SK-N-SH (cell line): ENCODE measurements at regions of chr12 and their contacts with region 1.

Region 1: GRCh38 chr12:54134850-54135249 is 53.9 kb downstream of the SMUG1 start:
- DNase-seq: peak; percentile 45
- H3K4me3 ChIP-seq: no peak overlapping the region
- H3K27ac ChIP-seq: peak overlapping the region in 1 of 2 experiments; percentile 67; a peak in 2 of 4 replicates
- H3K4me1 ChIP-seq: peaks cover 0 to 47% of the 10 kb centered on the region in 2 experiments; a peak in 2 of 4 replicates
- H3K27me3 ChIP-seq: no peaks in the 10 kb centered on the region
- CTCF ChIP-seq: no peak
- EP300 ChIP-seq: no peak
- RAD21 ChIP-seq: peak; percentile 76

Region 2: DNA sequence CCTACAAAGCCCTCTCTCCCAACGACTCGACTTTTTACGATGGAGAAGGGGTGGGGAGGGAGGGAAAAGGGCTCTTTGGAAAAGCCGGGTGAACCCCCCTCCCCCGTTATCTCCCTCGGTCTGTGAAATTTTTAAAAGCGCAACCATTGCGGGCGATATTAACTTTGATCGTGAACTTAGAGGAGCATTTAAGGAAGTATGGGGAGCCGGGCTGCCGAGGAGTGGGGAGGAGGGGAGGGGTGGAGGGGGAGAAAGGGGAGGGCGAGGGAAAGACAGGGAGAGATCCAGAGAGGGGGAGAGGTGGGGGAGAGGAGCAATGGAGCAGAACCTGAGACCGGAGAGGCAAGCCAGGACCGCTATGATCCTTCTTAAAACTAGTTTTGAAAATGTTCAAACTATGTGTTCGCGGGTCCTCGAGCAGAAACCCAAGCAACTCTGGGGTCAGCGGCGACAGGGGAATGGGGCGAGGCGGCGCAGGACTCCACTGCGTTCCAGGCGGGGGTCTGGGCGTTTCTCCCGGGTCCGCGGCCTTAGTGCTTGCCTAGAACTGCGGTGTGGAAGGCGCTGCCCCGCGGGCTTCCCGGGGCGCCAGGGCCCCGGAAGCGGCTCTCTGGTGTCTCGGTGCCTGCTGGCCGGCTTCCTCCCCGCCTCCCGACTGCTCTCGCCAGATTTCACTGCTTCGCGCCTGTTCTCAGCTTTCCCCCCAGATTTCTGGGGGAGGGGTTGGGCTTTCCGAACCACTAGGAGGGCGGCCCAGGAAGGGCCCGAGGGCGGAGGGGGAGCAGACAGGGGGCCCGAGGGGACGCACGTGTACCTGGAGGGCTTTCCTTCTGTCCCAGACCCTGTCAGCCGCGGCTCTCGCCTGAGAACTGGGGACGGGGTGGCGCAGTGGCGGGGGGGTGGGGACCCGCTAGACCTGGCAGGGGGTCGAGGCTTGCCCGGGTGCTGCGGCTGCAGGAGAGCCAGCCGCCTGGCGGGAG is 160.5 kb before region 1 on chr12 and contains the start of gene HOTAIR:
- CTCF ChIA-PET with region 1: no interaction called
- POLR2A ChIA-PET with region 1: no interaction called
- DNase-seq: peak; percentile 63
- H3K4me3 ChIP-seq: no peak within 1 kb of the TSS; a peak in 1 of 4 replicates
- H3K27ac ChIP-seq: no peak within 1 kb of the TSS
- H3K4me1 ChIP-seq: peaks cover 0 to 2% of the 10 kb centered on the region in 2 experiments; a peak in 2 of 4 replicates
- H3K27me3 ChIP-seq: peaks cover 98% of the 10 kb centered on the region
- CTCF ChIP-seq: no peak
- EP300 ChIP-seq: no peak
- RAD21 ChIP-seq: no peak
- polyA plus RNA-seq, gene HOTAIR: not detected in 2 replicates

Region 3: DNA sequence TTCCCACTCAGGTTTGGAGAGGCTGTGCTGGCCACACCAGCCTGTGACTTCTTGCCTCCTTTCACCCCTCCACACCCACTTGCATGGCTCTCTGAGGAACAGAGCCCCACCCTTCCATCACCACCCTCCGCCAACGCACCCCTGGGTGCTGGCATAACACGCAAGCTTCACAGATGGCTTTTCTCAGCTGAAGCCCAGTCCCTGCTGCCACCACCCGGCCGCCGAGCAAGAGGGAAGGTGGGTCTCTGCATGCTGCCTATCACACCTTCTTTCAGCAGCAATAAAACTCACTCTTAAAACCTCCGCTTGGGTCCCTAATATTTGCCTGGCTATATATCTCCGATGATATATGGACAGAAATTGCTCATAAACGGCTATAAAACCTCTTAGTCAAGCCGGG is 12.3 kb after region 1 on chr12:
- CTCF ChIA-PET with region 1: interaction called, 16 read pairs
- POLR2A ChIA-PET with region 1: no interaction called
- DNase-seq: no peak
- H3K4me3 ChIP-seq: no peak overlapping the region
- H3K27ac ChIP-seq: no peak overlapping the region
- H3K4me1 ChIP-seq: no peaks in the 10 kb centered on the region
- H3K27me3 ChIP-seq: no peaks in the 10 kb centered on the region
- CTCF ChIP-seq: no peak
- EP300 ChIP-seq: no peak
- RAD21 ChIP-seq: no peak

Region 4: GRCh38 chr12:54191550-54192022 is 56.7 kb after region 1 on chr12:
- CTCF ChIA-PET with region 1: interaction called, 127 read pairs
- POLR2A ChIA-PET with region 1: interaction called, 3 read pairs
- DNase-seq: peak; percentile 83
- H3K4me3 ChIP-seq: peak overlapping the region in 1 of 2 experiments; percentile 46; a peak in 1 of 4 replicates
- H3K27ac ChIP-seq: no peak overlapping the region
- H3K4me1 ChIP-seq: peaks cover 17 to 50% of the 10 kb centered on the region in 2 experiments; a peak in 3 of 4 replicates
- H3K27me3 ChIP-seq: no peaks in the 10 kb centered on the region
- CTCF ChIP-seq: peak; percentile 82
- EP300 ChIP-seq: no peak
- RAD21 ChIP-seq: peak; percentile 94

Region 5: GRCh38 chr12:54201001-54201794 is 66.3 kb after region 1 on chr12:
- CTCF ChIA-PET with region 1: interaction called, 127 read pairs
- POLR2A ChIA-PET with region 1: no interaction called
- DNase-seq: peak; percentile 88
- H3K4me3 ChIP-seq: peak overlapping the region in 1 of 2 experiments; percentile 16; a peak in 1 of 4 replicates
- H3K27ac ChIP-seq: no peak overlapping the region
- H3K4me1 ChIP-seq: peaks cover 5 to 13% of the 10 kb centered on the region in 2 experiments; a peak in 2 of 4 replicates
- H3K27me3 ChIP-seq: peaks cover 16% of the 10 kb centered on the region; the same call in 1 of the 2 replicates
- CTCF ChIP-seq: peak; percentile 92
- EP300 ChIP-seq: no peak
- RAD21 ChIP-seq: peak; percentile 85

Region 6: GRCh38 chr12:54300732-54301427 is 166.0 kb after region 1 on chr12 and contains the start of gene NFE2:
- CTCF ChIA-PET with region 1: no interaction called
- POLR2A ChIA-PET with region 1: no interaction called
- DNase-seq: peak; percentile 49
- H3K4me3 ChIP-seq: peak within 1 kb of the TSS in 1 of 2 experiments; percentile 14; a peak in 1 of 4 replicates
- H3K27ac ChIP-seq: no peak within 1 kb of the TSS
- H3K4me1 ChIP-seq: peaks cover 0 to 10% of the 10 kb centered on the region in 2 experiments; a peak in 1 of 4 replicates
- H3K27me3 ChIP-seq: no peaks in the 10 kb centered on the region; the same call in 1 of the 2 replicates
- CTCF ChIP-seq: no peak
- EP300 ChIP-seq: no peak
- RAD21 ChIP-seq: no peak
- polyA plus RNA-seq, gene NFE2: 0.16 and 0.25 TPM in 2 replicates

Region 7: DNA sequence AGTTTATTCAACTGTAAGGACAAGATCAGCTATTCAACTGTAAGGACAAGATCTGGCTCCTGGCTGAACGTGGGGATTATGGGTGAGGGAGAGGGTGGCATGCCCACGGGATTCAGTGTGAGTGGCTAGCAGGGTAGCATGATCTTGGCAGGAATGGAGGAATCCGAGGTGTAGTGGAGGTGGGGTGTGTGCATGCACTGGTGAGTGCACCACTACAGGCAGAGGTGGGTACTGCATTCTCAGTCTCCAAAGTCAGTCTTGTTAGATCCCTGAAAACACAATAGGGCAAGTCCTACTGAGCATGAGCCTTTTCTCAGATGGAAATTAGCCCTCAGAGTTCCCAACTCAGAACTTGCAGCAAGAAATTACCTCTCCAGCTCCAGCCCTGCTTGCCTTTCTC is 545.5 kb after region 1 on chr12:
- CTCF ChIA-PET with region 1: no interaction called
- POLR2A ChIA-PET with region 1: no interaction called
- DNase-seq: peak; percentile 10
- H3K4me3 ChIP-seq: no peak overlapping the region
- H3K27ac ChIP-seq: no peak overlapping the region
- H3K4me1 ChIP-seq: no peaks in the 10 kb centered on the region
- H3K27me3 ChIP-seq: peaks cover 8% of the 10 kb centered on the region; the same call in 1 of the 2 replicates
- CTCF ChIP-seq: peak; percentile 46
- EP300 ChIP-seq: no peak
- RAD21 ChIP-seq: no peak